GM12878 (cell line): ENCODE measurements at regions of chr10 and their contacts with region 1.

Region 1: GRCh38 chr10:123392182-123392963 is 238.2 kb downstream of the BUB3 start:
- DNase-seq: peak; percentile 99
- ATAC-seq: peak; percentile 84
- H3K4me3 ChIP-seq: peak overlapping the region; percentile 48; the same call in 1 of the 2 replicates
- H3K27ac ChIP-seq: peak overlapping the region; percentile 99
- H3K4me1 ChIP-seq: peaks cover 73% of the 10 kb centered on the region
- H3K27me3 ChIP-seq: no peaks in the 10 kb centered on the region
- CTCF ChIP-seq: no peak
- EP300 ChIP-seq: peak; percentile 96
- POLR2A ChIP-seq: peak; percentile 74
- RAD21 ChIP-seq: peak; percentile 22; the same call in 1 of the 2 replicates

Region 2: DNA sequence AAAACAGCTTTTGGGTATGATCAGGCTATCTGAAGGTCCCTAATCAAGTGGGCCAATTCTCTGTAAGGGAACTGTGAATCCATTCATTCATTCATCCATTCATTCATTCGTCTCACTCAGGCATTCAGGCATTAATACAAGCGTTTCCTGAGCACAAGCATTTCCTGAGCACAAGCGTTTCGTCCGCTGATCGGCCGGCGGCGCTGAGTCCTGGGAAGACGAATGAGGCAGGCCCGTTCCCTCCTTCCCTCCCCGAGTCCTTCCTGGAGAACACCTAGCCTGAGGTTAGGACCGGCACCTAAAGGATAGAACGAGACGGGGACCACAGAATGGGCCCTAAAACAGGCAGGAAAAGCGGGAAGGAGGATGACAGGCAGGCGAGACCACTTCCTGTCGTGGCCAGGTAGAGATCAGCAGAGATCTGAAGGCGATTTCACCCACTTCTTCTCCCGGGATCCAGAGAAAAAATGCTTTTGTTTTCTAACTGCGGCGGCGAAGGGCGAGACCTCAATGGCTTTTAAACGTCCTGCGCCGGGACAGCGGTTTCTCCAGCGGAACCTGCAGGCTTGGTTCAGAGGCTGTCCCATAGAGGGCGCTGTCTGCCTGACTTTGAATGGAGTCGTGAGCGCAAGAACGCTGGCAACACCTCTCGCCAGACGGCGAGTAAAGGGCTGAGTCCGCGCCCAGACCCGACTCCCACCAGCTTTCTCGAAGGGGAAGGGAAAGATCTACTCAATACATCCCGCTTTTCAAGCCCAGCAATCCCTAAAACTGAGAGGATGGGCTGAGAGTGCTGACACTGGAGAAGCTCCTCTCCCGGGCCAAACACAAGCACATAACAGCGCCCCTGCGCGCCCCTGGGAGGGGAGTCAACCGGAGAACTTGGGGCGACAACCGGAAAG is 259.5 kb before region 1 on chr10:
- CTCF ChIA-PET with region 1: interaction called, 3 read pairs
- POLR2A ChIA-PET with region 1: no interaction called
- RAD21 ChIA-PET with region 1: no interaction called
- SMC1A ChIA-PET with region 1: no interaction called
- in situ Hi-C with region 1: no loop called
- intact Hi-C with region 1: loop called (anchors 5 kb)
- DNase-seq: peak; percentile 40
- ATAC-seq: peak; percentile 88
- H3K4me3 ChIP-seq: peak overlapping the region; percentile 86
- H3K27ac ChIP-seq: no peak overlapping the region
- H3K4me1 ChIP-seq: peaks cover 7% of the 10 kb centered on the region
- H3K27me3 ChIP-seq: peaks cover 2 to 15% of the 10 kb centered on the region in 2 experiments; a peak in 2 of 4 replicates
- CTCF ChIP-seq: peak; percentile 90 to 97 (median 94); a peak in 5 of 6 replicates
- EP300 ChIP-seq: no peak
- POLR2A ChIP-seq: no peak
- RAD21 ChIP-seq: peak; percentile 85

Region 3: DNA sequence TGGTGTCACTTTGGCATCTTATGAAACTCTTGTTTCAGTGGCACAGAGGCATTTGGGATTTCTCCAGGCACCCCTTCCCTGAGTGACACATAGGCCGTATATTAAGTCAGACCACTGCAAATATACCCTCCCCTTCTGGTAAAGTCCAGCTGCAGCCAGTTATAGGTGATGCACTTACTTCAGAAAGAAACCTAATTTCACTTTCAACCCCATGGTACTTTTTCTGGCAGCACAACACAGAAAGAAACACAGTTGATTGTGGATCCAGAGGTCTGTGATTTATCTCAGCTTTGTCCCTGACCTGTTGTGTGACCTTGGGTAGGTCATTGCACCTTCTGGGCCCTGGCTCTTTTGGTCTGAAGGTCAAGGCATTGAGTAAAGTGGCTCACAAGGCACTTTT is 64.9 kb before region 1 on chr10:
- CTCF ChIA-PET with region 1: no interaction called
- POLR2A ChIA-PET with region 1: no interaction called
- RAD21 ChIA-PET with region 1: interaction called, 5 read pairs
- SMC1A ChIA-PET with region 1: interaction called, 3 read pairs
- in situ Hi-C with region 1: no loop called
- intact Hi-C with region 1: loop called (anchors 2 kb)
- DNase-seq: peak; percentile 69
- ATAC-seq: peak; percentile 89
- H3K4me3 ChIP-seq: no peak overlapping the region
- H3K27ac ChIP-seq: peak overlapping the region; percentile 40
- H3K4me1 ChIP-seq: peaks cover 48% of the 10 kb centered on the region
- H3K27me3 ChIP-seq: no peaks in the 10 kb centered on the region
- CTCF ChIP-seq: no peak
- EP300 ChIP-seq: peak; percentile 56 to 68; a peak in 2 of 4 replicates
- POLR2A ChIP-seq: no peak
- RAD21 ChIP-seq: no peak

Region 4: DNA sequence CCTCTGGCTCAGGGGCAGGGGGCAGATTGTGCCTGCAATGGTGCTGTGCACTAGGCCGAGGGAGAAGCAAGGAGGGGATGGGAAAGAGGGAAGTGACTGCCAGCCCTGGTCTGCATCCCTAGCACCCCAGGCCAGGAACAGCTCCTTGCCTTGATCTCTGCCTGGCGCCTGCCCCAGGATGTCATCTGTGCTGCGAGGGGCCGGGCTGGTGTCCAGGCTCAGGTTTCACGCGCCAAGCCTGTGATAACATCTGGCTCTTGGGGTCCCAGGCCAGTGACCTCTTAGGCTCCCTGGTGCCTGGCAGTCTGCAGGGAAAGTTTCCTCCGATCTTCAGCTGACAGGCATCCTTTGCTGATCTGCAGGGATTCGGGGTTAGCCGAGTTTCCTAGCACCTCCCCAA is 80.2 kb after region 1 on chr10:
- CTCF ChIA-PET with region 1: no interaction called
- POLR2A ChIA-PET with region 1: no interaction called
- RAD21 ChIA-PET with region 1: no interaction called
- SMC1A ChIA-PET with region 1: no interaction called
- in situ Hi-C with region 1: no loop called
- intact Hi-C with region 1: no loop called
- DNase-seq: no peak
- ATAC-seq: peak; percentile 42
- H3K4me3 ChIP-seq: no peak overlapping the region
- H3K27ac ChIP-seq: no peak overlapping the region
- H3K4me1 ChIP-seq: no peaks in the 10 kb centered on the region
- H3K27me3 ChIP-seq: no peaks in the 10 kb centered on the region
- CTCF ChIP-seq: no peak
- EP300 ChIP-seq: no peak
- POLR2A ChIP-seq: no peak
- RAD21 ChIP-seq: no peak

Region 5: GRCh38 chr10:123485341-123485960 is 93.1 kb after region 1 on chr10:
- CTCF ChIA-PET with region 1: no interaction called
- POLR2A ChIA-PET with region 1: no interaction called
- RAD21 ChIA-PET with region 1: no interaction called
- SMC1A ChIA-PET with region 1: no interaction called
- in situ Hi-C with region 1: no loop called
- intact Hi-C with region 1: loop called (anchors 5 kb)
- DNase-seq: no peak
- ATAC-seq: no peak
- H3K4me3 ChIP-seq: no peak overlapping the region
- H3K27ac ChIP-seq: no peak overlapping the region
- H3K4me1 ChIP-seq: peaks cover 9% of the 10 kb centered on the region
- H3K27me3 ChIP-seq: no peaks in the 10 kb centered on the region
- CTCF ChIP-seq: no peak
- EP300 ChIP-seq: no peak
- POLR2A ChIP-seq: no peak
- RAD21 ChIP-seq: no peak

Region 6: GRCh38 chr10:123537188-123537961 is 145.0 kb after region 1 on chr10:
- CTCF ChIA-PET with region 1: no interaction called
- POLR2A ChIA-PET with region 1: no interaction called
- RAD21 ChIA-PET with region 1: no interaction called
- SMC1A ChIA-PET with region 1: no interaction called
- in situ Hi-C with region 1: no loop called
- intact Hi-C with region 1: loop called (anchors 5 kb)
- DNase-seq: no peak
- ATAC-seq: peak; percentile 61
- H3K4me3 ChIP-seq: no peak overlapping the region
- H3K27ac ChIP-seq: peak overlapping the region; percentile 41; the same call in 1 of the 2 replicates
- H3K4me1 ChIP-seq: peaks cover 24% of the 10 kb centered on the region
- H3K27me3 ChIP-seq: no peaks in the 10 kb centered on the region
- CTCF ChIP-seq: no peak
- EP300 ChIP-seq: no peak
- POLR2A ChIP-seq: no peak
- RAD21 ChIP-seq: no peak

Region 7: DNA sequence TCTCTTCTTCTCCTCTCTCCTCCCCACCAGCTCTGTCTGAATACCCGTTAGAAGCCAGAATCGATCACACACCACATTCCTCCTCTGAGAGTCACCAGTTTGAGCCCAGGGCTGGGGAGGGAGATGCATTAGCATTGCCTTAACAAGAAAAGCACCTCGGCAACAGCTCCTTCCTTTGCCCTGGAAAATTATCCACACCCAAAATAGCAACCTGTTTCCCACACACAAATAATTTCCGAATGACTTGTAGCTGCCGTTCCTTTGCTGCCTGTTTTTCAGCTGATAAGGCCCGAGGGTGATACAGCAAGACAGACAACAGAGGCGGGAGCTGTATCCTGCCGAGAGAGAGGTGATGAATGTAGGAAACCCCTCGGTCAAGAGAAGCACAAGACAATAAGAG is 407.9 kb after region 1 on chr10:
- CTCF ChIA-PET with region 1: no interaction called
- POLR2A ChIA-PET with region 1: no interaction called
- RAD21 ChIA-PET with region 1: no interaction called
- SMC1A ChIA-PET with region 1: no interaction called
- in situ Hi-C with region 1: no loop called
- intact Hi-C with region 1: no loop called
- DNase-seq: no peak
- ATAC-seq: no peak
- H3K4me3 ChIP-seq: no peak overlapping the region
- H3K27ac ChIP-seq: no peak overlapping the region
- H3K4me1 ChIP-seq: no peaks in the 10 kb centered on the region
- H3K27me3 ChIP-seq: peaks cover 0 to 4% of the 10 kb centered on the region in 2 experiments; a peak in 1 of 4 replicates
- CTCF ChIP-seq: no peak
- EP300 ChIP-seq: no peak
- POLR2A ChIP-seq: no peak
- RAD21 ChIP-seq: no peak

Region 8: GRCh38 chr10:123842692-123843385 is 450.5 kb after region 1 on chr10:
- CTCF ChIA-PET with region 1: no interaction called
- POLR2A ChIA-PET with region 1: no interaction called
- RAD21 ChIA-PET with region 1: no interaction called
- SMC1A ChIA-PET with region 1: no interaction called
- in situ Hi-C with region 1: loop called (anchors 5 kb)
- intact Hi-C with region 1: no loop called
- DNase-seq: no peak
- ATAC-seq: peak; percentile 7
- H3K4me3 ChIP-seq: no peak overlapping the region
- H3K27ac ChIP-seq: no peak overlapping the region
- H3K4me1 ChIP-seq: no peaks in the 10 kb centered on the region
- H3K27me3 ChIP-seq: no peaks in the 10 kb centered on the region
- CTCF ChIP-seq: no peak
- EP300 ChIP-seq: no peak
- POLR2A ChIP-seq: no peak
- RAD21 ChIP-seq: no peak

Region 9: DNA sequence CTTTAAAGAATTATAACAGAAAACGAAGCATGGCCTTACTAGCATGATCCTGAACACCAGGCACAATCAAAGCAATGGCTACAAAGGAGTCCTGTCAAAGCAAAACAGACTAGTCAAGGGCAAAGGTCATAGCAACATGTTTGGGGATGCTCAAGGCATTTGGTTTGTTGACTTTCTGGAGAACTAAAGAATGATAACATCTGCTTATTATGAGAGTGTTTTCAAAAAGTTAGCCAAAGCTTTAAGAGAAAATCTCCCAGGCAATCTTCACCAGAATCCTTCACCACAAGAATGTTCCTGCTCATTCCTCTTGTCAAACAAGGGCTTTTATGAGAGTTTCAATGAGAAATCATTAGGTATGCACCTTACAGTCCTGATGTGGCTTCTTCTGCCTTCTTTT is 594.4 kb after region 1 on chr10:
- CTCF ChIA-PET with region 1: no interaction called
- POLR2A ChIA-PET with region 1: no interaction called
- RAD21 ChIA-PET with region 1: no interaction called
- SMC1A ChIA-PET with region 1: no interaction called
- in situ Hi-C with region 1: no loop called
- intact Hi-C with region 1: no loop called
- DNase-seq: no peak
- ATAC-seq: no peak
- H3K4me3 ChIP-seq: no peak overlapping the region
- H3K27ac ChIP-seq: no peak overlapping the region
- H3K4me1 ChIP-seq: no peaks in the 10 kb centered on the region
- H3K27me3 ChIP-seq: peaks cover 0 to 5% of the 10 kb centered on the region in 2 experiments; a peak in 2 of 4 replicates
- CTCF ChIP-seq: no peak
- EP300 ChIP-seq: no peak
- POLR2A ChIP-seq: no peak
- RAD21 ChIP-seq: no peak